HepG2 (cell line): ENCODE measurements at regions of chr11 and their contacts with region 1.

Region 1: DNA sequence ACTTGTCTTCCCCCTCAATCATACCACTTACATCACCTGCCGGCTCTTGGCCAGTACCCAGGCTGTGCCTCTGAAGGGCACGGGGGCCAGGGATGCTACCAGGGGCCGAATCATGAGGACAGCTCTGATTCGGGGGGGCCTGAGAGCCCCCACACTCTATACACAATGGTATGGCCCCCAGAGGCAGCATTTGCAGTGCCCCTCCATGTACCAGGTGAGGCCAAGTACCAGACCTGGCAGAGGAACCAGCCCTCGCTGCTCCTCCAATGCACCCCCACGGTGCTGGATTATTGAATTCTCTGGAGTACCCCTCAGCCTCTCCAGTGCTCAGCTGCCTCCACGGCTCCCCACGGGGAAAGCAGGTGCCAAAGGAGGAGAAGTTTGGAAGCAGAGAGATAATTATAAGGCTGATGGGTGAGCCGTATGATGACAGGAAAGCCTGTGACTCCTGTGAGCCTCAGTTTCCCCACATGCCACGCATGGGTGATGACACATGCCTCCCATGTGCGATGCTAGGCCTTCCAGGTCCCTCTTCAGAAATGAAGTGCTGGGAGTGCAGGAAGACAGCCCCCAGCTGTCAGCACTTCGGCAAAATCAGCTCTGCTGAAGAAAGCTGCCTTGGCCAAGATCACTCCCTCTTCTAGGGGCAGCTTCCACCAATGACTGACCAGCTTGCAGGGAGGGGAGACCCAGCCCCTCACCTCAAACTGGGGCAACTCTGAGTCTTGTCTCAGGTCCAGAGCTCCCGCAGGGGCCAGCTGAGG is 69.9 kb downstream of the THAP12 start:
- DNase-seq: no peak
- ATAC-seq: no peak
- H3K4me3 ChIP-seq: no peak overlapping the region
- H3K27ac ChIP-seq: no peak overlapping the region
- H3K4me1 ChIP-seq: no peaks in the 10 kb centered on the region
- H3K27me3 ChIP-seq: peaks cover 4 to 45% of the 10 kb centered on the region in 2 experiments; a peak in 4 of 5 replicates
- CTCF ChIP-seq: no peak
- EP300 ChIP-seq: no peak
- POLR2A ChIP-seq: no peak
- RAD21 ChIP-seq: no peak

Region 2: GRCh38 chr11:76269661-76270261 is 41.3 kb before region 1 on chr11:
- CTCF ChIA-PET with region 1: no interaction called
- POLR2A ChIA-PET with region 1: no interaction called
- in situ Hi-C with region 1: no loop called
- intact Hi-C with region 1: loop called (anchors 2 kb)
- DNase-seq: no peak
- ATAC-seq: peak; percentile 18; the same call in 2 of the 3 replicates
- H3K4me3 ChIP-seq: no peak overlapping the region
- H3K27ac ChIP-seq: no peak overlapping the region
- H3K4me1 ChIP-seq: peaks cover 9% of the 10 kb centered on the region; the same call in 1 of the 2 replicates
- H3K27me3 ChIP-seq: peaks cover 2 to 13% of the 10 kb centered on the region in 2 experiments
- CTCF ChIP-seq: no peak
- EP300 ChIP-seq: no peak
- POLR2A ChIP-seq: no peak
- RAD21 ChIP-seq: no peak

Region 3: DNA sequence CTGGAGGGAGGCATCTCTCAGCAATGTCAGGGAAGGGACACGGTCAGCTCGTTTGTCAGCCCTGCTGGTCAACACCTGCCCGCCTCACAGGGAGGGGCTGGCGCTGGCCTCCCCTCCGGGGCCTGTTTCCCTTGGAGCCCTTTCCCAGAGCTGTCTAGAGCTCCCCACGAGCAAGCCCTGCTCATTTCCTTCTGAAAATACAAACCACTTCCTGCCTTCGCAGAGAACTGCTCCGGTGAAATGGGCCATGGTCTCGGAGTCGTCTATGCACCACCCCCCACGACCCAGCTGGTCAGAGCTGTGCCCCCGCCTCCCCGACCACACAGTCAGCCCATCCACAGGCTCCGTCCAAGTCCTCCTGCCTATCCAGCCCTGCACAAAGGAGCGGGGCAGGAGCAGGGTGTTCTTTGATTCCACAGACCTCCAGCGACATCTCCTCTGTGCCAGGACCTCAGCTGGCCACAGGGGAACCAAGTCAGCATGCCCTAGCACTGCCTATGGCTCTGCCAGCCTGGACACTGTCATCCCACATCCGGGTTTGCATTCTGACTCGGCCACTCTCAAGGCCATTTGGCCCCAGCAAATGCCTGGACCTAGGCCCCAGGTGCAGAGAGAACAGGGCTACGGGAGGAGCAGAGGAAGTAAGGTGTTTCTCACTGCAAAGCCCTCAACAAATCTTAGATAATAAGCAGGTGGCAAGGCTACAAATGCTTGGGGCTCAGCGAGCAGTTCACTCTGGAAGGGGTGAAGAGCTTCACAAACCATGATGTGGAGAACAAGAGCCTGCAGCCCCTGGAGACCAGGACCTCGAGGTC is 22.6 kb before region 1 on chr11:
- CTCF ChIA-PET with region 1: no interaction called
- POLR2A ChIA-PET with region 1: no interaction called
- in situ Hi-C with region 1: no loop called
- intact Hi-C with region 1: no loop called
- DNase-seq: no peak
- ATAC-seq: peak; percentile 13; the same call in 2 of the 3 replicates
- H3K4me3 ChIP-seq: no peak overlapping the region
- H3K27ac ChIP-seq: no peak overlapping the region
- H3K4me1 ChIP-seq: peaks cover 9% of the 10 kb centered on the region; the same call in 1 of the 2 replicates
- H3K27me3 ChIP-seq: peaks cover 3 to 27% of the 10 kb centered on the region in 2 experiments; a peak in 3 of 5 replicates
- CTCF ChIP-seq: no peak
- EP300 ChIP-seq: no peak
- POLR2A ChIP-seq: no peak
- RAD21 ChIP-seq: no peak